Naive thymus-derived CD4-positive, alpha-beta T cell (primary cell): ENCODE measurements at regions of chr6 and their contacts with region 1.

Region 1: GRCh38 chr6:28266962-28267694 is at the start of gene ZSCAN26:
- DNase-seq: peak; percentile 67 to 91 (median 87)
- ATAC-seq: peak; percentile 96
- H3K4me3 ChIP-seq: peak within 1 kb of the TSS; percentile 96
- H3K4me3 Mint-ChIP-seq: peak within 1 kb of the TSS in 1 of 10 donors; percentile 30
- H3K27ac ChIP-seq: peak within 1 kb of the TSS; percentile 91
- H3K27ac Mint-ChIP-seq: peak within 1 kb of the TSS in 1 of 9 donors; percentile 48
- H3K4me1 ChIP-seq: peaks cover 0 to 24% of the 10 kb centered on the region in 2 donors
- H3K4me1 Mint-ChIP-seq: peaks cover 6 to 37% (median 24%) of the 10 kb centered on the region in 7 donors
- H3K27me3 ChIP-seq: no peaks in the 10 kb centered on the region
- H3K27me3 Mint-ChIP-seq: peaks cover 0 to 7% (median 0%) of the 10 kb centered on the region in 5 donors
- total RNA-seq, gene ZSCAN26: 8.0 to 27.8 (median 12.5) TPM

Region 2: DNA sequence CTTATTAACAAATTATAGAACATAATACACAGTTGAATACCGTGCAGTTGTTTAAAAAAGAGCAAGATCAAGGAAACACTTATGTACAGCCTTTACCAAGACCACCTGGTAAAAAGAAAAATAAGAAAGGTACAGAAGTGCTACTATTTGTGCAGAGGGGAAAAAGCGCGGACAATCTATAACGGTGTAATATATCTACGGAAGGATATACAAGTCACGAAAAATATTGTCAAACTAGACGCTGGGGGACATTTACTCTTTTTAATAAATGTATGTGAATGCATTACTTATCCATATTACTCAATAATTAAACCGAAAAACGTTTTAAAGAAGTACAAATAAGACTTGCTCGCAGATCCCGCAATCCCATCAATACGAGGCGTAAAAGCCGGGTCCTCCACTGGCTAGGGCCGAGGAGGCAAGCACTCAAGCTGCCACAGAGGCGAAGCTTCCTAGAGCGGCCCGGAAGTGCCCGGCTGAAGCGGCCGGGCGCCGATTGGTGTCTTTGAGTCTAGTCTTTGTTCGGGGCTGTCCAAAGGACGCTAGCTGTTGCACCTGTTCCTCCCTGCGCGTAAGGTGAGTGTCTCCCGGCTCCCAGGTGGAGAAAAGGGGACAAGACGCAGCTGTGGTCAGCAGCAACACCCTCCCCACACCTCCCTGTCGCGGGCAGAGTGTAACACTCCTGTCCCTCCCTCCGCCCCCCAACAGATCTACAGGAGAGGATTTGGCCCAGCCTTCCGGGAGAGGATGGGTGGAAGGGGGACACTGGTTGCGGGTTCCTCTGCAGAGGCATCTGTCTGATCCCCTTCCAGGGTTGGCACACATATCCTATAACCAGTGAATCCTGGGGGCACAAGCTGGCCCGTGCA is 142.8 kb before region 1 on chr6 and contains the start of gene ZSCAN16:
- CTCF ChIA-PET with region 1: no interaction called
- POLR2A ChIA-PET with region 1: interaction called, 6 read pairs
- intact Hi-C with region 1: loop called in 1 of 2 experiments (anchors 1 kb)
- DNase-seq: peak; percentile 43 to 72 (median 59)
- ATAC-seq: peak; percentile 86
- H3K4me3 ChIP-seq: peak within 1 kb of the TSS; percentile 86
- H3K4me3 Mint-ChIP-seq: peak within 1 kb of the TSS; percentile 80 to 98 (median 95)
- H3K27ac ChIP-seq: peak within 1 kb of the TSS; percentile 93
- H3K27ac Mint-ChIP-seq: peak within 1 kb of the TSS; percentile 83 to 99 (median 96)
- H3K4me1 ChIP-seq: peaks cover 12 to 16% of the 10 kb centered on the region in 2 donors
- H3K4me1 Mint-ChIP-seq: peaks cover 35 to 54% (median 48%) of the 10 kb centered on the region in 7 donors
- H3K27me3 ChIP-seq: no peaks in the 10 kb centered on the region
- H3K27me3 Mint-ChIP-seq: no peaks in the 10 kb centered on the region
- total RNA-seq, gene ZSCAN16: 6.4 to 13.9 (median 7.6) TPM

Region 3: DNA sequence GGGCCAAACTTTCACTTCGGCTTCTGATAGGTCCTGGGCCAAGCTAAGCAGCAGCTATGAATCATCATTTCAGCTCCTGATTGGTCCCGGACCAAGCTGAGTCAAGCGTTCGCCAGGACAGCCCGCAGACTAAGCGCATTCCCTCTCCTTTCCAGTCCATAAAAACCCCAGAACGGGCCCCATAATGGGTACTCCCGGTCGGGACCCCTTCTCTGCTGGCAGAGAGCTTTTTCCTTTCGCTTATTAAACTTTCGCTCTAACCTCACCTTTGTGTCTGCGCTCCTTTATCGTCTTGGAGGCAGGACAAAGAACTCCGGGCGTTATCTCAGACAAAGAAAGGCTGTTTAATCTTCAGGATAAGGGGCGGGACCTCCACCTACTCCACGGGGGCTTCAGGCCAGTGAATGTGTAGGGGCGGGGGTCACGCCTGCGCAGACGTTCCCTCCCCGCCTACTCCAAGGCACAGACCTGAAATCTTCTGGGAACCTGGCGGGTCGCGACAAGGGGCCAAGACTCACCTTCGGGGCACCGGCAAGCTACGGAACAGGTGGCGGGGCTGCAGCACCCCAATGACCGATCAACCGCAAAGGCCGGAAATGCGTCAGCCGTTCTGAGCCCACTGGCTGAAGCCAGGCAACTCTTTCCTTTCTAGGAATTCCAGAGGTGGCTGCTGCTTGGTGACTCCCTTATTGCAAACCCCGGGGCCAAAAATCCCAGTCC is 68.6 kb after region 1 on chr6 and contains the start of gene ZSCAN31:
- CTCF ChIA-PET with region 1: no interaction called
- POLR2A ChIA-PET with region 1: interaction called, 13 read pairs
- intact Hi-C with region 1: loop called (anchors 1 to 2 kb)
- DNase-seq: peak; percentile 43 to 87 (median 76)
- ATAC-seq: peak; percentile 95
- H3K4me3 ChIP-seq: peak within 1 kb of the TSS; percentile 97
- H3K4me3 Mint-ChIP-seq: peak within 1 kb of the TSS in 1 of 10 donors; percentile 58
- H3K27ac ChIP-seq: peak within 1 kb of the TSS; percentile 92
- H3K27ac Mint-ChIP-seq: peak within 1 kb of the TSS in 1 of 9 donors; percentile 47
- H3K4me1 ChIP-seq: peaks cover 9 to 10% of the 10 kb centered on the region in 2 donors
- H3K4me1 Mint-ChIP-seq: peaks cover 0 to 16% (median 9%) of the 10 kb centered on the region in 7 donors
- H3K27me3 ChIP-seq: no peaks in the 10 kb centered on the region
- H3K27me3 Mint-ChIP-seq: peaks cover 0 to 3% (median 0%) of the 10 kb centered on the region in 5 donors
- total RNA-seq, gene ZSCAN31: 0.93 to 2.4 (median 1.2) TPM

Region 4: DNA sequence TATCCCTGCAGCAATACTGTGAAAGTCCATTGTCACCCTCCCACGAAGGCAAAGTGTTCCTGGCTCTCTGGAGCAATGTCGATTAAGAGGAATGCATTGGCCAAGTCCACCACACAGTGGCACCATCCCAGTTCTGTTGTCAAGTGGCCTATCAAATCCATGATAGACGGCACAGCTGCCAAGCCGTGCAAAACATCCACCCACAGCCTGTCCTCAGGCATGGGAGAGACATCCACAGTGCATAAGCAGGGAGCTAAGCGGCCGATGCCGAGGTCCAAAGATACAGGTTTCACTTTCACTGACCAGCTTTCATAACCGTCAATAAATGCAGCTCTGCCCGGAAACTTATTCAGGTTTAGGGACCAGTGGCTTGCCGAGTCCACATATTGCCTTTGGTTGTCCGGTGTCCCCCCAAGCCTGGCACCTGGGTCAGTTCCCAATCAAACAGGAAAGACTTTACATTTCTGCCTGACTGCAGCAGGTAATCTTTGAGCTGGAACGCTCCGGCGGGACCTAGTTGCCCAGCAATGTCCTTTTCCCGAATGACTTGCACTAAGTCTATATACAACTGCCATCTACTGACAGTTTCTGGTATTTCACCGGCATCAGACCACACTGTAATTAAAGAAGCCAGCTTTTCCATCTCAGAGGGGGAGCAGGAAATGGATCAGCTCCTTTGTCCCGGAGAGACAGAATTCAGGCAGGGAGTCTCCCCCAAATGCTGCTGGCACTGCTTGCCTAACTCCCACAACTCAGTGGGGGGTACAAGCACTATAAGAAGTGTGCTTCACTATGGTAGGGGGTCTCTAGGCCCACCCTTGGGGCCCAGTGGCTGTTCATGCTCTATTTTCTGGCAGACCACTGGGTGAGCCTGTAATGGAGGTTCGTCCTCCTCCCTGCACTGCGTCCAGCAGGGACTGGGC is 88.9 kb after region 1 on chr6:
- CTCF ChIA-PET with region 1: interaction called, 10 read pairs
- POLR2A ChIA-PET with region 1: interaction called, 13 read pairs
- intact Hi-C with region 1: no loop called
- DNase-seq: peak; percentile 26 to 69 (median 54)
- ATAC-seq: peak; percentile 92
- H3K4me3 ChIP-seq: peak overlapping the region; percentile 69
- H3K4me3 Mint-ChIP-seq: peak overlapping the region; percentile 78 to 96 (median 92)
- H3K27ac ChIP-seq: no peak overlapping the region
- H3K27ac Mint-ChIP-seq: peak overlapping the region; percentile 21 to 89 (median 62)
- H3K4me1 ChIP-seq: peaks cover 0 to 7% of the 10 kb centered on the region in 2 donors
- H3K4me1 Mint-ChIP-seq: peaks cover 16 to 38% (median 34%) of the 10 kb centered on the region in 7 donors
- H3K27me3 ChIP-seq: no peaks in the 10 kb centered on the region
- H3K27me3 Mint-ChIP-seq: no peaks in the 10 kb centered on the region

Region 5: DNA sequence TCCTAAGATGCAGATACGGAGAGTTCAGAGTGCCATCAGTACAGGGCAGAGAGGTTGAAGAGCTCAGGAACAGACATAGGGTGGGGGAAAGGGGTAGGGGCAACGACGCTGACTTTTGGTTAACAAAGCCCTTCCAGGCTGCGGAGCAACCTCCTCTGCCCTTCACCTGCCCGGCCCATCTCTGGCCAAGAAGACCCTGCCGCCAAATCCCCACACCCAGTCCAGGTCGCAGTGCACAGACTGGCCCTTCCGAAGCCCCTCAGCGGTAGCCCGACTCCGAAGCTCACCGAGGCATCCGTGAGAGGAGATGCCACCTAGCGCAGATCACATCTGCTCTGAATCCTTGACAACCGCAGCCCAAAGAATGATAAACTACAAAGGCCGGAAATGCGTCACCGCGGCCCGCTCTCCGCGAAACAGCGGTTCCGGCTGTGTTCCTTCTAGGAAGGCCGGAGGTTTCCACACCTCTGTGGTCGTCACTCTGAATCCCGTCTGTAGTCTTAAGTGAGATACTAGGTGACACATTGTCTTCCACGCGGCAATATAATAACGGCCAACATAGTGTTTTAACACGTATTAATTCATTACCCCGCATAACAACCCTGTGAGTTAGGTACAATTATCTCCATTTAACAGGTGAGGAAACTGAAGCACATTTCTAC is 176.1 kb after region 1 on chr6 and contains the start of gene ZSCAN23:
- CTCF ChIA-PET with region 1: no interaction called
- POLR2A ChIA-PET with region 1: no interaction called
- intact Hi-C with region 1: loop called in 1 of 2 experiments (anchors 5 kb)
- DNase-seq: peak; percentile 59 to 93 (median 88)
- ATAC-seq: peak; percentile 96
- H3K4me3 ChIP-seq: peak within 1 kb of the TSS; percentile 76
- H3K4me3 Mint-ChIP-seq: peak within 1 kb of the TSS; percentile 86 to 98 (median 96)
- H3K27ac ChIP-seq: peak within 1 kb of the TSS; percentile 60
- H3K27ac Mint-ChIP-seq: peak within 1 kb of the TSS; percentile 76 to 97 (median 93)
- H3K4me1 ChIP-seq: peaks cover 13 to 16% of the 10 kb centered on the region in 2 donors
- H3K4me1 Mint-ChIP-seq: peaks cover 15 to 38% (median 32%) of the 10 kb centered on the region in 7 donors
- H3K27me3 ChIP-seq: peaks cover 0 to 6% of the 10 kb centered on the region in 2 donors
- H3K27me3 Mint-ChIP-seq: peaks cover 9 to 36% (median 30%) of the 10 kb centered on the region in 5 donors
- total RNA-seq, gene ZSCAN23: 1.4 to 3.4 (median 2.4) TPM